Activated naive CD4-positive, alpha-beta T cell treated with anti-CD3 and anti-CD28 coated beads, Interleukin-2, amount 10 ng/mL, durations not matched to agents 7 days and 5 days (primary cell): ENCODE measurements at regions of chr13 and their contacts with region 1.

Region 1: GRCh38 chr13:52665325-52665724 is 12.7 kb downstream of the SUGT1 start:
- DNase-seq: no peak
- H3K4me3 Mint-ChIP-seq: no peak overlapping the region
- H3K27ac Mint-ChIP-seq: no peak overlapping the region
- H3K4me1 Mint-ChIP-seq: no peaks in the 10 kb centered on the region
- H3K27me3 Mint-ChIP-seq: no peaks in the 10 kb centered on the region

Region 2: GRCh38 chr13:52652196-52652979 is 12.9 kb before region 1 on chr13 and contains the start of gene SUGT1:
- CTCF ChIA-PET with region 1: interaction called, 34 read pairs
- DNase-seq: peak; percentile 97
- H3K4me3 Mint-ChIP-seq: no peak within 1 kb of the TSS
- H3K27ac Mint-ChIP-seq: no peak within 1 kb of the TSS
- H3K4me1 Mint-ChIP-seq: peaks cover 13% of the 10 kb centered on the region
- H3K27me3 Mint-ChIP-seq: no peaks in the 10 kb centered on the region

Region 3: DNA sequence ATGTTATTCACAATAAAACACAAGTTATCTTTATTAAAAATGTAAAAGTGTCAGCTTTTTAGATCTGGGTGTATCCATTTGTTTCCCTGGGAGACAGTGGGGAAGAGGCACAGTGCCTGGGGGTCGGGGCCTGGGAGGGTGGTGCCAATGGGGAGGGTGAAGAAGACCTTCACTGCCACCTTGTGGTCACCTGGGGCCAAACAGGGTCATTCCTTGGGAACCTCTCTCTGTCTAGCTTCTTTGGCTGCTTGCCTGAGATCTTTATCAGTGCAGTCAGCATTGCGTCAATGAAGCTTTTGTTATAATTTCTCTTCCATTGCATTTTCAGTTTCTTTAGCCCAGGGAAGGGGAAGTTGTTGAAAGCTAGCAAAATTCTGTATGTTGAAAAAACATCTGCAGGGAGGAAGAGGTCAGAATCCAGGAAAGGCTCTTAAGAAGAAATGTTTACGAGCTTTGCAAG is 144.0 kb after region 1 on chr13:
- CTCF ChIA-PET with region 1: interaction called, 23 read pairs
- DNase-seq: peak; percentile 58
- H3K4me3 Mint-ChIP-seq: no peak overlapping the region
- H3K27ac Mint-ChIP-seq: no peak overlapping the region
- H3K4me1 Mint-ChIP-seq: peaks cover 5% of the 10 kb centered on the region
- H3K27me3 Mint-ChIP-seq: peaks cover 7% of the 10 kb centered on the region

Region 4: GRCh38 chr13:52968074-52968700 is 302.9 kb after region 1 on chr13:
- CTCF ChIA-PET with region 1: interaction called, 12 read pairs
- DNase-seq: peak; percentile 76
- H3K4me3 Mint-ChIP-seq: no peak overlapping the region
- H3K27ac Mint-ChIP-seq: no peak overlapping the region
- H3K4me1 Mint-ChIP-seq: no peaks in the 10 kb centered on the region
- H3K27me3 Mint-ChIP-seq: peaks cover 9% of the 10 kb centered on the region